ENCODE measurements at regions of chr22 and their contacts with region 1.

Region 1: GRCh38 chr22:28772633-28773460 is at the start of gene CCDC117:
- DNase-seq: peak; percentile 98
- total RNA-seq, gene CCDC117: 12.3 TPM

Region 2: DNA sequence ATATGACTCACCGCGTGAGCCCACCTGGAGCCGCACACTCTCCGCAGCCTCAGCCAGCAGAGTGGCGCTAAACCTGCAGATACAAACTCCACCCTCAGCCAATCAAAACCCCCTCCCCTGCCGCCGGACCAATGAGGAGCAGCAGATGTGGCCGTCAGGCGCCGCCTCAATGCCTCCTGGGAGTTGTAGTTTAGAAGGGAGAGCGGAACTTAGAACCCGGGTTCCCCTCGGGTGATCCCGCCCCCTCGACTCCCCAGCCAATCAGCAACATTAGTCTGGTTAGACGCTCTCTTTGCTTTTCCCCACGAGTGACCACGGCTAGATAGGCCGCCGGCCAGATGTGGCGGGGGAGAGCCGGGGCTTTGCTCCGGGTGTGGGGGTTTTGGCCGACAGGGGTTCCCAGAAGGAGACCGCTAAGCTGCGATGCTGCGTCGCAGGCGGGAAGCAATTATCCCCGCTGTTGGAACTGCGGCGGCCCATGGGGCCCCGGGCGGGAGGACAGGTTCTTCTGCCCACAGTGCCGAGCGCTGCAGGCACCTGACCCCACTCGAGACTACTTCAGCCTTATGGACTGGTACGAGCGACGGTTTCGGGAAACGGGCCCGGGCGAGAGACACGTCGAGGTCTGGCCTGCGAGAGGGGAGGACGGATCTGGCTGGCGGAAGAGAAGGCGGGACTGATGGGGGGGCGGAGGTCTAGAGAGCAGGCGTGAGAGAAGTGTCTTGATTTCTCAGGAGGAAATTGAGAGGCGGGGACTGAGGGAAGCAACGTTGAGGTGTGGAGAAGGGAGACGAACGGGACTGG is 30.9 kb before region 1 on chr22 and contains the starts of genes CHEK2 and HSCB:
- intact Hi-C with region 1: loop called (anchors 2 kb)
- DNase-seq: peak; percentile 99
- total RNA-seq, gene CHEK2: 2.2 TPM
- total RNA-seq, gene HSCB: 10.0 TPM

Region 3: GRCh38 chr22:28800308-28801077 is 27.6 kb after region 1 on chr22 and contains the start of gene XBP1:
- intact Hi-C with region 1: loop called (anchors 1 kb)
- DNase-seq: peak; percentile 98
- total RNA-seq, gene XBP1: 81.2 TPM

Region 4: DNA sequence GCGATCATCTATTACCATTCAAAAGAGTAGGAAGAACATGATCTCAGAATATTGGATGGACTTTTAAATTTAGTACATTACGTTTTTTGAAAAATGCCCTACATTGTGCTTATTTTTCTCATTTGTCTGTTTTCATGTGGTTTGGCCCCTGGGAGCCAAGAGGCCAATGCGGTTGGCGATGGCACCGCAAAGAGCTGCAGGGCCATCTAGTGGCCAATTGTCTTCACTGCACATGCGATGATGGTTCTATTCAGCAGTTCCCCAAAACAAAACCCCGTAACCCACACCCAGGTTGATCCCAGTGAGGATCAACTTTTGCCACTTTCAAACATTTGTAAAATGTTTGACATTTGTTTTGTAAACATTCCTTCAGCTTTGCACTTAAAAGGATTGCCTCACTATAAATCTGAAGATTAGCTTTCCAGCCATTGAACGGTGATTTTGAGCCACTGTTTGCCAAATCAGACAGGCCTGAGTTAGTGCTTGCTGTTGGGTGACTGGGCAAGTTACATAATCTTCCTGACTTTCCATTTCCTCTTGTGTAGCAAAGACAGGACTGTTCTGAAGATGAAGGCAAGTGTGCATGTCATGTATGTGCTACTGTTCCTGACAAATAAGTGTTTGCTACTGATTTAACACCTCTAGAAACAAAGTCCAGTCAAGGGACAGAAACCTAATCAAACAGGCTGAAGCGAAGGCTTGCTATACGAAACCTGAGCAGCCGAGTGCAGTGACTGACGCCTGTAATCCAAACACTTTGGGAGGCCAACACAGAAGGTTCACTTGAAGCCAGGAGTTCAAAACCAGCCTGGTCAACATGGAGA is 56.7 kb after region 1 on chr22:
- intact Hi-C with region 1: no loop called
- DNase-seq: peak; percentile 81

Region 5: GRCh38 chr22:29245637-29246385 is 473.0 kb after region 1 on chr22:
- intact Hi-C with region 1: no loop called
- DNase-seq: peak; percentile 87